ENCODE measurements at regions of chr21 and their contacts with region 1.

Region 1: DNA sequence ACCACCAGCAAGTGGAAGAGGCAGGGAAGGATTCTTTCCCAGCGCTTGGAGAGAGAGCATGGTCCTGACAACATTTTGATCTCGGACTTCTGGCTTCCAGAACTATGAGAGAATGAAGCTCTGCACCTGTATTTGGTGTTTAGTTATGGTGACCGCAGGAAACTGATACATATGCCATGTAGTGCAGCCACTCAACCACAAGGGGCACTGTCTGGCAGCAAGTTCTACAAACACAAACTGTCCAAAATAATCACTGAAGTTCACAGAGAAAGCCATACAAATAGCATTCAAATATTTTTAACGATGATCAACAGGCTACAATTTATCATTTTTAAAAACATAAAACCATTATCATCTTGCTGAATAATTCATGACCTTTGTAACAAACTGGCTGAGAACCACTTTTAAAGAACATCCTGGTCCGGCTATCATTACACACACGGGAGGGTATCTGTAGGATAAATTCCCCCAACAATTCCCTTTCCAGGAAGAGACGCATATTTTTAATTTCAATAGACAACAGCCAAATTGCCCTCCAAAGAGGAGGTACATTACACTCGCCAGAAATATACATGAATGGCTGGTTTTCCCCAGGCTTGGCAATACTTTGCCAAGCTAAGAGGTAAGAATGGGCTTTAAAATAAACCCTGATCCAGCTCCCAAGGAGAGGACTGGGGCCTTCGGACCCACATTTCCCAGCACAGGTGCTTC is 9.2 kb upstream of the CBR3 start:
- DNase-seq: no peak
- ATAC-seq: no peak
- H3K4me3 ChIP-seq: no peak overlapping the region
- H3K27ac ChIP-seq: no peak overlapping the region
- H3K4me1 ChIP-seq: no peaks in the 10 kb centered on the region
- H3K27me3 ChIP-seq: no peaks in the 10 kb centered on the region
- CTCF ChIP-seq: peak; percentile 90

Region 2: GRCh38 chr21:36052860-36053714 is 72.6 kb before region 1 on chr21:
- CTCF ChIA-PET with region 1: interaction called, 10 read pairs
- POLR2A ChIA-PET with region 1: no interaction called
- in situ Hi-C with region 1: no loop called
- intact Hi-C with region 1: no loop called
- DNase-seq: no peak
- ATAC-seq: no peak
- H3K4me3 ChIP-seq: no peak overlapping the region
- H3K27ac ChIP-seq: no peak overlapping the region
- H3K4me1 ChIP-seq: no peaks in the 10 kb centered on the region
- H3K27me3 ChIP-seq: no peaks in the 10 kb centered on the region
- CTCF ChIP-seq: no peak

Measured in Panc1 (cell line).